Posterior vena cava (tissue), 2 donors: ENCODE measurements at regions of chr4 and their contacts with region 1.

Region 1: GRCh38 chr4:176883681-176884418 is 91.1 kb upstream of the VEGFC start:
- DNase-seq: no peak

Region 2: GRCh38 chr4:176377780-176378179 is 506.1 kb before region 1 on chr4:
- intact Hi-C with region 1: no loop called
- DNase-seq: no peak

Region 3: DNA sequence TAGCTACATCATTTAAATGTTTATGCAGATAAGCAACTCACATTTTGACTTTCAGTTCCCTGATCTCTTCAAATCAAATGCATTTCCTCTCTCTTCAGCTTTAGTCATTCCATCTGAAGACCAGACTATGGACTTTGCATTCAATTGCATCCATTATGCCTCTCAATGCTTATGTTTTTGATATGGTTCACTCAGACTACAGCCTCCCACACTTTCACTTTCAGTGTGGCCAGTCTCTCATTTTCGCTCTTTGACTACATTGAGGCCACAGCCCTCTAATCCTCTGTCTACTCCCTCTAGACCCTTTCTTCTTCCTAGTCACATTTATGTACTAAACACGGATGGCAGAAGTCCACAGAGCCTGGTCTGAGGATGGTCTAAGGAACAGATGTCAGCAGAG is 66.6 kb before region 1 on chr4:
- intact Hi-C with region 1: no loop called
- DNase-seq: no peak

Region 4: DNA sequence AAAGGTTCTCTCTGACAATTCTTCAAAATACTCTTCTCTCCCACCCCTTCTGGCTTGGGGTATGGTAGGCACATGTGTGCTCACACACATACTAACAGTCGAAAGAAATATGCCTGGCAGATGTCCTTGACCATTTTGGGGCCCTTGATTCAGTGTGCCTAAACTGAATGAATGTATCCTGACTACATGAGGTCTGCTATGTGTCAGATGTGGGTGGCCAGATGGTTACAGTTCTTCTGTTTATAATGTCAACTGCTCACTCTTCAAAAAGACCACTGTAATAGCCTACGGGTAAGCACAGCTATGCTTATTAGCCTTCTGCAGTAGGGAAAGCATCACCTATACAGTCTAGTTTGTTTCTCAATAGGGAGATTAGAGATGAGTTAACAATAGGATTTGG is 27.4 kb before region 1 on chr4:
- intact Hi-C with region 1: loop called in 1 of 2 experiments (anchors 1 kb)
- DNase-seq: no peak